Activated CD4-positive, alpha-beta T cell treated with anti-CD3 and anti-CD28 coated beads, Interleukin-2, amount 10 ng/mL, durations not matched to agents 24 days and 14 days (primary cell): ENCODE measurements at regions of chr1 and their contacts with region 1.

Region 1: DNA sequence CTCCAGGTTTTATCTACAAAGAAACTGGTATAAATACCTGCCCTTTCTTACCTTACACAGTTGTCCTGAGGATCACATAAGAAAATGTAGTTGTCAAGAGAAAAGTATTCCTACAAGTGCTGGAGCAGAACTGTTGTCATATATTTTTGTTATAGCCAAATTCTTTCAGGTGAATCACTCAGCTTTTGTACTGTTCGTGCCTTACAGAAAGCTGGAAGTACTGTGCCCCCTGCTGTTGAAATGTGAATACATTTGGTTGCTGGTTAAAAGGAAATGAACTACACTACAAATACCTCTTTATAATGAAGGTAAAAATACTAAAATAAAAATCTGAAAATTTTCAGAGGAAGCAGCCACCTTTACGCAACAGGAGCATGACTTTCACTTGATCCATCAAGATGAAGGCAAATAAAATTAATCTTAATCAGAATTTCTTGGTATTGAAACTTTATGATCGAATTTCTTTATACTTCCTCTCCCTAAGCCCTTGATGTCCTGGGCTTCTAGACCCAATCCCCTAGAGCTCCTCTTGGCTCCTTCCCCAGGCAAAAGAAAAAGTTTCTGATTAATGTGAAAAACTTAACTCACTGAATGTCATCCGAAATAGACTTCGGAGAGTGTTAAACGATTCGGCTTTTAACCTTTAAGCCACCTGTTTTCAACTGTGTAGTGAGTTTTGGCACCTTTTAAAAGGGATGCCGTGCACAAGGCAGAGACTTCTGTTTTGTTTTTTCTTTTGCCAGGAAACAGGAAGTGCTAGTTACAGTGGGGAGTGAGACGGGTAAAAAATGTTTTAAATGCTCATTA is 12.5 kb downstream of the CHML start:
- DNase-seq: peak; percentile 85
- H3K4me3 Mint-ChIP-seq: peak overlapping the region; percentile 72
- H3K27ac Mint-ChIP-seq: peak overlapping the region; percentile 70
- H3K4me1 Mint-ChIP-seq: peaks cover 12% of the 10 kb centered on the region
- H3K27me3 Mint-ChIP-seq: no peaks in the 10 kb centered on the region

Region 2: DNA sequence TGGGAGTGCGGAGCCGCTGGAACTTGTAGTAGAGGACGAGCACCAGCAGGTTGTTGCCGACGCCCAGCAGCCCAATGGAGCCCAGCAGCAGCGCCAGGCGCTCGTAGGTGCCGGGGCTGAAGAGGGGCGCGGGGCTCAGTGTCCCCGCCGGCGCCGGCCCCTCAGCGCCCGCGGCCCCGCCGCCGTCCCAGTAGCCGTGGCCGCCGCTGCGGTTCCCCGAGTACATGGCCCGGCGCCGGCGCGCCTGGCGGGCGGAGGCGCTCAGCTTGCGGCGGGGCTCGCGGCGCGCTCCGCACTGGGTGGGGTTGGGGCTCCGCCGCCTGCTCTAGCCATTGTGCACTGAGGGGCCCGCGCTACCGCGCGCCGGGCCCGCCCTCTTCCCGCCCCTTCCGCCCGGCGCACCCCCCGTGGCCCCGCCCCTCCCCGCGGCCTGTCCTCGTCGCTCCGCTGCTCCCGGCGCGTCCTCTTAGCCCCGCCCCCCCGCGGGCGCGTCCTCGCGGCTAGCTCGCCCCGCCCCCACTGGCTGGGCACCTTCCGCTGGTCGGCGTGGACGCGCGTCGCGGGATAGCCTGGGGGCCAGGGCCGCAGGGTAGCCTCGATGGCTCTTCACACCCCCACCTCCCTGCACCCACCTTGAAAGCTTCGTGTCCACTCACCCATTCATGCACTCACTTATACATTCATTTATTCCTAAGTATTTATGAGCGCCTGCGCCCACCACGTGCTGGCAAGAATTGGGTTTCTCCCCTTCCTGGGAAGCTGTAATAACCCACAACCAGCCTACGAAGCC is 12.6 kb after region 1 on chr1 and contains the starts of genes CHML and OPN3:
- intact Hi-C with region 1: loop called (anchors 1 kb)
- DNase-seq: peak; percentile 98
- H3K4me3 Mint-ChIP-seq: peak within 1 kb of the TSS; percentile 97
- H3K27ac Mint-ChIP-seq: peak within 1 kb of the TSS; percentile 92
- H3K4me1 Mint-ChIP-seq: peaks cover 31% of the 10 kb centered on the region
- H3K27me3 Mint-ChIP-seq: no peaks in the 10 kb centered on the region
- total RNA-seq, gene CHML: 19.5 and 21.4 TPM in 2 replicates
- total RNA-seq, gene OPN3: 11.2 and 11.6 TPM in 2 replicates

Region 3: GRCh38 chr1:241675983-241676382 is 48.3 kb after region 1 on chr1:
- intact Hi-C with region 1: no loop called
- DNase-seq: no peak
- H3K4me3 Mint-ChIP-seq: no peak overlapping the region
- H3K27ac Mint-ChIP-seq: no peak overlapping the region
- H3K4me1 Mint-ChIP-seq: peaks cover 10% of the 10 kb centered on the region
- H3K27me3 Mint-ChIP-seq: peaks cover 12% of the 10 kb centered on the region